ENCODE measurements at regions of chr5 and their contacts with region 1.

Region 1: GRCh38 chr5:134145779-134146581 is 30.8 kb downstream of the SKP1 start:
- DNase-seq: peak; percentile 62
- H3K4me3 ChIP-seq: no peak overlapping the region
- H3K27ac ChIP-seq: no peak overlapping the region
- H3K4me1 ChIP-seq: peaks cover 38% of the 10 kb centered on the region
- H3K27me3 ChIP-seq: no peaks in the 10 kb centered on the region
- CTCF ChIP-seq: peak; percentile 95 to 97

Region 2: GRCh38 chr5:134041570-134042411 is 104.2 kb before region 1 on chr5:
- CTCF ChIA-PET with region 1: interaction called, 39 read pairs
- dilution Hi-C with region 1: no loop called
- in situ Hi-C with region 1: no loop called
- intact Hi-C with region 1: loop called (anchors 1 kb)
- DNase-seq: no peak
- H3K4me3 ChIP-seq: no peak overlapping the region
- H3K27ac ChIP-seq: no peak overlapping the region
- H3K4me1 ChIP-seq: no peaks in the 10 kb centered on the region
- H3K27me3 ChIP-seq: no peaks in the 10 kb centered on the region
- CTCF ChIP-seq: no peak

Region 3: GRCh38 chr5:134053840-134054338 is 92.1 kb before region 1 on chr5:
- CTCF ChIA-PET with region 1: no interaction called
- dilution Hi-C with region 1: loop called (anchors 5 kb)
- in situ Hi-C with region 1: loop called in 1 of 2 experiments (anchors 10 kb)
- intact Hi-C with region 1: no loop called
- DNase-seq: peak; percentile 80
- H3K4me3 ChIP-seq: no peak overlapping the region
- H3K27ac ChIP-seq: peak overlapping the region; percentile 87
- H3K4me1 ChIP-seq: peaks cover 33% of the 10 kb centered on the region
- H3K27me3 ChIP-seq: no peaks in the 10 kb centered on the region
- CTCF ChIP-seq: no peak

Region 4: GRCh38 chr5:134086943-134087305 is 59.1 kb before region 1 on chr5:
- CTCF ChIA-PET with region 1: no interaction called
- dilution Hi-C with region 1: loop called (anchors 5 kb)
- in situ Hi-C with region 1: no loop called
- intact Hi-C with region 1: no loop called
- DNase-seq: no peak
- H3K4me3 ChIP-seq: no peak overlapping the region
- H3K27ac ChIP-seq: no peak overlapping the region
- H3K4me1 ChIP-seq: peaks cover 14% of the 10 kb centered on the region
- H3K27me3 ChIP-seq: no peaks in the 10 kb centered on the region
- CTCF ChIP-seq: no peak

Region 5: GRCh38 chr5:134101686-134102439 is 44.1 kb before region 1 on chr5:
- CTCF ChIA-PET with region 1: no interaction called
- dilution Hi-C with region 1: no loop called
- in situ Hi-C with region 1: no loop called
- intact Hi-C with region 1: loop called (anchors 1 kb)
- DNase-seq: no peak
- H3K4me3 ChIP-seq: no peak overlapping the region
- H3K27ac ChIP-seq: no peak overlapping the region
- H3K4me1 ChIP-seq: peaks cover 9% of the 10 kb centered on the region
- H3K27me3 ChIP-seq: no peaks in the 10 kb centered on the region
- CTCF ChIP-seq: peak; percentile 72 to 93

Region 6: GRCh38 chr5:134289509-134290113 is 143.6 kb after region 1 on chr5:
- CTCF ChIA-PET with region 1: no interaction called
- dilution Hi-C with region 1: no loop called
- in situ Hi-C with region 1: no loop called
- intact Hi-C with region 1: loop called (anchors 1 kb)
- DNase-seq: peak; percentile 52
- H3K4me3 ChIP-seq: no peak overlapping the region
- H3K27ac ChIP-seq: no peak overlapping the region
- H3K4me1 ChIP-seq: no peaks in the 10 kb centered on the region
- H3K27me3 ChIP-seq: no peaks in the 10 kb centered on the region
- CTCF ChIP-seq: peak; percentile 76 to 78

Region 7: DNA sequence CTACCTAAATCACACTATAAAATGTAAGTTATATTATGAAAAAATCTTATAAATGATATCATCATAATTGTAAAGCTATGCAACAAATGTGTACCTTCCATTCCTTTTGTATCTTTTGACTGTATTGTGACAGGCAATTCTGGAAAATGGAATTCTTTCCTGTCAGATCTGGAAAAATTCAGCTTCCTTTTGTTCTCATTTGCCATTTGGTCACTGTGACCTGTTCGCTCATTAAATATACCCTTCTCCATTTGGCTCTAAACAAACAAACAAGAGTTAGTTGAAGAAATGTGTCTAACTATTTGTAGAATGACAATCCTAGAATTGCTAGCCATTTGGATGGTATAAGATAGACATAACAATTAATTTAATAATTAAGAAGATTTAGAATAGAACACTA is 158.3 kb after region 1 on chr5:
- CTCF ChIA-PET with region 1: no interaction called
- dilution Hi-C with region 1: no loop called
- in situ Hi-C with region 1: no loop called
- intact Hi-C with region 1: no loop called
- DNase-seq: no peak
- H3K4me3 ChIP-seq: no peak overlapping the region
- H3K27ac ChIP-seq: no peak overlapping the region
- H3K4me1 ChIP-seq: no peaks in the 10 kb centered on the region
- H3K27me3 ChIP-seq: no peaks in the 10 kb centered on the region
- CTCF ChIP-seq: no peak

Measured in mammary epithelial cell (primary cell).